Thyroid gland (tissue), 4 donors: ENCODE measurements at regions of chr18 and their contacts with region 1.

Region 1: DNA sequence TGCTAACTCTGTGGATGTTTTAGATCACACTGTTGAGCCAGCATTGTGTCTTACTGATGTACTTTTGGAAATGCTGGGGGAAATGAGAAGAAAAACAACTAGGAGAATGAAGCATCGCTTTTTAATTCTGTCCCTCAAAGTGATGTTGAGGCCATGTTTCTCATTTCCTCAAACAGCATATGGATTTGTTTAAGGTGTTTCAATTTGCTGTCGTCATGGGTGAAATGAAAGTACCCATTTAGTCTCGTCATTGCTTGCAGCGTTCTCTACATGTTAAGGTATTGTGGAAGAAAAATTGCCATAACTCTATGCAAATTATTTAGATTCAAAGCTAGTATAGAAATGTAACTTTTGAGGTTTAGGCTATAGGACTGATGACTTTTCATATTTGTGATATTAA is 151.3 kb downstream of the KCTD1 start:
- DNase-seq: no peak
- H3K4me3 ChIP-seq: no peak overlapping the region
- H3K27ac ChIP-seq: no peak overlapping the region
- H3K4me1 ChIP-seq: no peaks in the 10 kb centered on the region
- H3K27me3 ChIP-seq: no peaks in the 10 kb centered on the region
- CTCF ChIP-seq: no peak
- POLR2A ChIP-seq: no peak

Region 2: GRCh38 chr18:26637324-26637723 is 240.3 kb after region 1 on chr18:
- intact Hi-C with region 1: loop called (anchors 10 kb)
- DNase-seq: no peak
- H3K4me3 ChIP-seq: no peak overlapping the region
- H3K27ac ChIP-seq: no peak overlapping the region
- H3K4me1 ChIP-seq: peaks cover 3 to 8% of the 10 kb centered on the region in 2 donors
- H3K27me3 ChIP-seq: no peaks in the 10 kb centered on the region
- CTCF ChIP-seq: no peak
- POLR2A ChIP-seq: no peak